CD8-positive, alpha-beta T cell (primary cell): ENCODE measurements at regions of chr5 and their contacts with region 1.

Region 1: GRCh38 chr5:41856644-41857491 is 13.4 kb downstream of the OXCT1 start:
- DNase-seq: peak in 8 of 9 experiments; percentile 23 to 84 (median 53)
- ATAC-seq: peak; percentile 89
- H3K4me3 ChIP-seq: no peak overlapping the region
- H3K4me3 Mint-ChIP-seq: no peak overlapping the region
- H3K27ac ChIP-seq: no peak overlapping the region
- H3K27ac Mint-ChIP-seq: no peak overlapping the region
- H3K4me1 ChIP-seq: no peaks in the 10 kb centered on the region
- H3K4me1 Mint-ChIP-seq: peaks cover 5% of the 10 kb centered on the region
- H3K27me3 ChIP-seq: no peaks in the 10 kb centered on the region
- H3K27me3 Mint-ChIP-seq: no peaks in the 10 kb centered on the region
- CTCF ChIP-seq: peak; percentile 72

Region 2: GRCh38 chr5:41649659-41650058 is 207.2 kb before region 1 on chr5:
- CTCF ChIA-PET with region 1: no interaction called
- POLR2A ChIA-PET with region 1: no interaction called
- intact Hi-C with region 1: no loop called
- DNase-seq: no peak
- ATAC-seq: no peak
- H3K4me3 ChIP-seq: no peak overlapping the region
- H3K4me3 Mint-ChIP-seq: no peak overlapping the region
- H3K27ac ChIP-seq: no peak overlapping the region
- H3K27ac Mint-ChIP-seq: no peak overlapping the region
- H3K4me1 ChIP-seq: no peaks in the 10 kb centered on the region
- H3K4me1 Mint-ChIP-seq: no peaks in the 10 kb centered on the region
- H3K27me3 ChIP-seq: no peaks in the 10 kb centered on the region
- H3K27me3 Mint-ChIP-seq: no peaks in the 10 kb centered on the region
- CTCF ChIP-seq: no peak

Region 3: DNA sequence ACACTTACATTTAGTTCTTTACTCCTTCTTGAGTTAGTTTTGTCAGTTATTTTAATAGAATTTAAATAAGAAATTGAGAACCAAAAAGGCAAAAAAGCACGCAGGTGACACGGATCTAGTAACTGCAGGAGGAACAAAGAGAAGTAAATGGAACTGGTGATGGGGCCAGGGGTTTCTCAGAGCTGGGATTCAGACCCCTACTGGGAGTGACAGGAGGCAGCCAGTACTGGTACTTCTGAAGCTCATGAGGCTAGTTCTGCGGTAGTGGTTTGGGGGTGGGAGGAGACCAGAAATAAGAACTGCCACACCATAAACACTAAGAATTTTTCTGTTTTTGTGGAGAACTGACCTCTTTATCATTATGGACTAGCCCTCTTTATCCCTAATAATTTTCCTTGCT is 34.8 kb before region 1 on chr5:
- CTCF ChIA-PET with region 1: no interaction called
- POLR2A ChIA-PET with region 1: no interaction called
- intact Hi-C with region 1: no loop called
- DNase-seq: no peak
- ATAC-seq: no peak
- H3K4me3 ChIP-seq: no peak overlapping the region
- H3K4me3 Mint-ChIP-seq: no peak overlapping the region
- H3K27ac ChIP-seq: no peak overlapping the region
- H3K27ac Mint-ChIP-seq: no peak overlapping the region
- H3K4me1 ChIP-seq: no peaks in the 10 kb centered on the region
- H3K4me1 Mint-ChIP-seq: peaks cover 13% of the 10 kb centered on the region
- H3K27me3 ChIP-seq: no peaks in the 10 kb centered on the region
- H3K27me3 Mint-ChIP-seq: no peaks in the 10 kb centered on the region
- CTCF ChIP-seq: no peak

Region 4: GRCh38 chr5:41869739-41870626 is 13.1 kb after region 1 on chr5 and contains the start of gene OXCT1:
- CTCF ChIA-PET with region 1: interaction called, 11 read pairs
- POLR2A ChIA-PET with region 1: interaction called, 4 read pairs
- intact Hi-C with region 1: no loop called
- DNase-seq: peak; percentile 87 to 97 (median 93)
- ATAC-seq: peak; percentile 94
- H3K4me3 ChIP-seq: peak within 1 kb of the TSS; percentile 90 to 98
- H3K4me3 Mint-ChIP-seq: peak within 1 kb of the TSS; percentile 92
- H3K27ac ChIP-seq: peak within 1 kb of the TSS; percentile 87 to 90
- H3K27ac Mint-ChIP-seq: peak within 1 kb of the TSS; percentile 98
- H3K4me1 ChIP-seq: peaks cover 24% of the 10 kb centered on the region
- H3K4me1 Mint-ChIP-seq: peaks cover 48% of the 10 kb centered on the region
- H3K27me3 ChIP-seq: no peaks in the 10 kb centered on the region
- H3K27me3 Mint-ChIP-seq: no peaks in the 10 kb centered on the region
- CTCF ChIP-seq: no peak
- total RNA-seq, gene OXCT1: 16.1 to 19.8 TPM

Region 5: GRCh38 chr5:42005561-42006153 is 148.8 kb after region 1 on chr5:
- CTCF ChIA-PET with region 1: interaction called, 4 read pairs
- POLR2A ChIA-PET with region 1: interaction called, 4 read pairs
- intact Hi-C with region 1: loop called in 1 of 2 experiments (anchors 5 kb)
- DNase-seq: peak in 2 of 9 experiments; percentile 7 to 27
- ATAC-seq: no peak
- H3K4me3 ChIP-seq: no peak overlapping the region
- H3K4me3 Mint-ChIP-seq: no peak overlapping the region
- H3K27ac ChIP-seq: no peak overlapping the region
- H3K27ac Mint-ChIP-seq: no peak overlapping the region
- H3K4me1 ChIP-seq: no peaks in the 10 kb centered on the region
- H3K4me1 Mint-ChIP-seq: no peaks in the 10 kb centered on the region
- H3K27me3 ChIP-seq: no peaks in the 10 kb centered on the region
- H3K27me3 Mint-ChIP-seq: peaks cover 16% of the 10 kb centered on the region
- CTCF ChIP-seq: peak; percentile 84

Region 6: DNA sequence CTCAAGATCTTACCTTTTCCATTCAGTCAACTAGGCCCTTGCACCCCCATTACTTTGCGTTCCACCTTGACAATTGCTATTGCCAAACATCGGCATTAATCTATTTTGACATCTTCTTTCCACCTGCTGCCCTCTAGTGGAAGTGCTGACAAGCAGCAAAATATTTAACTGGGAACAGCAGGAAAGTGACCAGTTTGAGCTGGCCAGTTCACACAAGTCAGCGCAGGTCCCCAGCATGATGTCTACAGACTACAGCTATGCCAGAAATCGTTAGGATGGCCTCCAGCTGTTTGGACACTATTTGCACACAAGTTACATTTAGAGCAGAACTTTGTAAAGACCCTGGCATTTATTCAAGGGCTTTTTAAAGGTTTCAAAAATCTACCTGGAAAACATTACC is 726.5 kb after region 1 on chr5:
- CTCF ChIA-PET with region 1: interaction called, 4 read pairs
- POLR2A ChIA-PET with region 1: no interaction called
- intact Hi-C with region 1: loop called in 1 of 2 experiments (anchors 2 kb)
- DNase-seq: peak in 5 of 9 experiments; percentile 5 to 51 (median 22)
- ATAC-seq: no peak
- H3K4me3 ChIP-seq: no peak overlapping the region
- H3K4me3 Mint-ChIP-seq: no peak overlapping the region
- H3K27ac ChIP-seq: no peak overlapping the region
- H3K27ac Mint-ChIP-seq: no peak overlapping the region
- H3K4me1 ChIP-seq: no peaks in the 10 kb centered on the region
- H3K4me1 Mint-ChIP-seq: no peaks in the 10 kb centered on the region
- H3K27me3 ChIP-seq: peaks cover 0 to 5% of the 10 kb centered on the region in 2 experiments
- H3K27me3 Mint-ChIP-seq: peaks cover 12% of the 10 kb centered on the region
- CTCF ChIP-seq: peak; percentile 54

Region 7: DNA sequence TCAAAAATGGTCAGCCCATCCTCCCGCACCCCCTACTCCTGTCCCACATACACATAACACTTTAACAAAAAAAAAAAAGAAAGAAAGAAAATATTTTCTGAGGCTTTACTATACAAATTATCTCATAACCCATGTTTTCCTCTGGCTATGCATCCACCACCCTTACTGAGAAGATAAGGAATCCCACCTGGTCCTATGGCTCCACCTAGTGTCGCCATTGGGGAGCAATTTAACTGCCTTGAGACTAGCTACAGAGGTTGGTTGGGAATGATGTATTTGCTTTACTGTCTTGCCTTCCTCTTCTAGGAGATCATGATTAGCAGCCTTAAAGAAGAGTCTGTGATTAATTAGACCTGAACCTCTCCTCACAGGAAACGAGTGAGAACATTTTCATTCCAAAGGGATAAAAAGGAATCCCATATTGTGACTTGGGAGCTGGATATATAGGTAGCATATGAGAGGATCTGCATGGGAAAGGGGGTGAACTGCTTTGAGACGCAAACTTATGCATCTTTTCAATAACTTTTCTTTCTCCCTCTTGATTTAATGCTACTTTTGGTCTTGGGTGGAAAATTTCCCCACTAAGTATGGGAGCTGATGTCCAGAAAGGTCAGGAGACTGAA is 1032.6 kb after region 1 on chr5:
- CTCF ChIA-PET with region 1: no interaction called
- POLR2A ChIA-PET with region 1: no interaction called
- intact Hi-C with region 1: loop called (anchors 2 kb)
- DNase-seq: peak; percentile 31 to 75 (median 59)
- ATAC-seq: peak; percentile 79
- H3K4me3 ChIP-seq: no peak overlapping the region
- H3K4me3 Mint-ChIP-seq: no peak overlapping the region
- H3K27ac ChIP-seq: no peak overlapping the region
- H3K27ac Mint-ChIP-seq: no peak overlapping the region
- H3K4me1 ChIP-seq: no peaks in the 10 kb centered on the region
- H3K4me1 Mint-ChIP-seq: no peaks in the 10 kb centered on the region
- H3K27me3 ChIP-seq: no peaks in the 10 kb centered on the region
- H3K27me3 Mint-ChIP-seq: peaks cover 7% of the 10 kb centered on the region
- CTCF ChIP-seq: peak; percentile 84